ENCODE measurements at regions of chr3 and their contacts with region 1.

Region 1: DNA sequence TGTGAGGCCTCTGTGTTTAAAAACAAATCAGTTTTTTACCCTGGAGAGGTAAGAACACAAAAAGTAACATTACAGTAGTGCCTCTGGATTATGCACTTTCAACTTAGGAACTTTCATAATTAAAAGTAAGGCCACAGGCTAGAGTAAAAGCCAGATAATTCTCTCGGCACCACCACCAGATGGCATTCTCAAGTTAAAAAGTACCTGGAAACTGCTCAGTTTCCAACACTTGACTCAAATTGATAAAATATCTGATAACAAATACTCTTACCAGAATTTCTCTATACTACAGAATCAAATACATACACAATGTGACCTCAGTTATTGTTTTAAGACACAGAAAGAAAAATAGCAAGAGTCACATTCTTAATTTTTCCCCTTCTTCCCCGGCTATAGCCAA is 19.9 kb downstream of the SPICE1 start:
- DNase-seq: peak; percentile 23
- ATAC-seq: peak; percentile 53; the same call in 1 of the 2 replicates
- H3K4me3 ChIP-seq: no peak overlapping the region
- H3K27ac ChIP-seq: no peak overlapping the region
- H3K4me1 ChIP-seq: no peaks in the 10 kb centered on the region
- H3K27me3 ChIP-seq: no peaks in the 10 kb centered on the region
- CTCF ChIP-seq: peak; percentile 38 to 52 (median 48); a peak in 5 of 6 replicates
- POLR2A ChIP-seq: no peak
- RAD21 ChIP-seq: peak; percentile 51

Region 2: DNA sequence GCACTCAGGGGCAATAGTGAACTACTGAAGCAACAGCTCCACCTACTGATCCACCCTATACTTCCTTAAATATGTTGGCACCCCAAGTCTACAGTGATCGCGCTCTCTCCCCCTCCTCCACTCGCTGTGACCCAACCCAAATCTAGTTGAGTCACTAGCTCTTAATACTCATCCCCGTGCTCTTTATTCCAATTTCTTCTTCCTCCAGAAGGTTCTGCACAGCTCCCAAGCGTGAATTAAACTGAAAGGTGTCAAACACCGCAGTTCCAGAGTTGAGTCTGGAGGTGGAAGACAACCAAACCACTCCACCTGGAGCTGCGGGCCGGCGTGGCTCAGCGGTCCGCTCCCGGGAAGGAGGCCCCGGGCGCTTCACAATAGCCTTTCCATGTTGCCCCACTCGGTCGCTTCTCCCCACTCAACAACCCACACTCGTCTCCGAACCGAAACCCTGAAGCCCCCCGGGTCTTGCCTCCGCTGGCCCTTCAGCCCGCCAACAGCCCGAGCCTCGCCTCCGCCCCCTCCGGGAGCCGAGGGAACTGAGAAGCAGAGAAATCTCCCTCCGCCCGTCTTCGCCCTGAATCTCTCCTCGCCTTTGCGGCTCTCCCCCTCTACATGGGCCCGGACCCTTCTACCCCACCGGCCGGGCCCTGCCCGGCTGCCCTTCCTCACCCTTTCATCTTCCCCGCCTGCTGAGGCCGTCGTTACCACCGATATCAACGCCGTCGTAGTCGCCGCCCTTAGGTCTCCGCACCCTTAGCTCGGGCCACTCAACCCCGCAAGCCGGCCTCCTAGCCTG is 250.4 kb after region 1 on chr3:
- CTCF ChIA-PET with region 1: interaction called, 3 read pairs
- POLR2A ChIA-PET with region 1: no interaction called
- RAD21 ChIA-PET with region 1: no interaction called
- intact Hi-C with region 1: loop called (anchors 2 kb)
- DNase-seq: peak; percentile 80
- ATAC-seq: peak; percentile 74
- H3K4me3 ChIP-seq: peak overlapping the region; percentile 93
- H3K27ac ChIP-seq: peak overlapping the region; percentile 95
- H3K4me1 ChIP-seq: peaks cover 6 to 23% of the 10 kb centered on the region in 2 experiments; a peak in 3 of 4 replicates
- H3K27me3 ChIP-seq: no peaks in the 10 kb centered on the region
- CTCF ChIP-seq: peak; percentile 48 to 63 (median 62); a peak in 5 of 6 replicates
- POLR2A ChIP-seq: no peak
- RAD21 ChIP-seq: peak; percentile 68

Measured in HCT116 (cell line).